Posterior cingulate gyrus (tissue), 11 donors: ENCODE measurements at regions of chr4 and their contacts with region 1.

Region 1: GRCh38 chr4:109424093-109424841 is 9.3 kb upstream of the SEC24B start:
- DNase-seq: no peak

Region 2: GRCh38 chr4:109658871-109659410 is 234.7 kb after region 1 on chr4:
- intact Hi-C with region 1: loop called (anchors 5 kb)
- DNase-seq: no peak